AG04450 (cell line): ENCODE measurements at regions of chr1 and their contacts with region 1.

Region 1: GRCh38 chr1:109499661-109500536 is 6.0 kb downstream of the CYB561D1 start:
- DNase-seq: no peak
- H3K4me3 ChIP-seq: no peak overlapping the region
- H3K27ac ChIP-seq: peak overlapping the region; percentile 47
- H3K27me3 ChIP-seq: no peaks in the 10 kb centered on the region
- CTCF ChIP-seq: peak; percentile 51

Region 2: GRCh38 chr1:109516872-109517271 is 17.0 kb after region 1 on chr1:
- CTCF ChIA-PET with region 1: interaction called, 14 read pairs
- POLR2A ChIA-PET with region 1: no interaction called
- DNase-seq: no peak
- H3K4me3 ChIP-seq: no peak overlapping the region
- H3K27ac ChIP-seq: no peak overlapping the region
- H3K27me3 ChIP-seq: peaks cover 19% of the 10 kb centered on the region
- CTCF ChIP-seq: no peak